ENCODE measurements at regions of chr10 and their contacts with region 1.

Region 1: DNA sequence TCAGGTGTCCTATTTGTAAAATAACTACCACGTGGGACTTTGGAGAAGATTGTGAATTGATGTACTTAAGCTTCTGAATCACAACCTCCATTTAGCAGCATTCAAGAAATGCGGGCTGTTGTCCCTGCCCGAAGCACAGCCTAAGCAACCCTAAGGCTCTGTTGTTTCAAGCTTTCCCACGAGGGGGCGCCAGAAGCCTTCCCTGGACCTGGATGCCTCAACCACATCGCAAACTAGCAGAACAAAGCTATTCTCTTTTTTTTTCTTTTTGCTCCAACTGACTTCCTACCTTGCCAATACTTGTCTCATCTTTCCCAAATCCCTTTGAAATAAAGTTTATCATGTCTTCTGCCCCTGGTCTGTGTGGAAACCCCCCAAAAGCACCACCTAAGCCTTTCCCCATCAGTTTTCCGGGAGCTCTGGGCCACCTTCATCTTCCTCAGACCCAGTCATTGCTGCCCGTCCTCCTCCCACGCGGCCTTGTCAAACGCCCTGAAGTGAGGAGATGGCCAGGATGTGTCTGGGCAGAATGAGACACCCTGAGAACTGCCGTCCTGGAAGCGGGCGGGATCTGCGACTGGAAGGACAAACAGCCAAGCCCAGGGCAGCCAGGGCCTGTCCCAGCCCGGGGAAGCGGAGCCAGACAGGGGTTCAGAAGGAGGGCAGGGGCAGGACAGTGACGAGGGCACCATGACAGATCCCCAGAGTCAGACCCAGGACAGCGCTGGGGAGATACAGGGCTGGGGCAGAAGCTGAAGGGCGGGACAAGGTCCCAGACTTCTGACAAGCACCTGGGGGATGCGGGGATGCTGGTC is 112.7 kb downstream of the SLIT1 start:
- DNase-seq: peak; percentile 65 to 85 (median 72)
- H3K4me3 ChIP-seq: no peak overlapping the region
- H3K4me3 Mint-ChIP-seq: no peak overlapping the region
- H3K27ac ChIP-seq: no peak overlapping the region
- H3K27ac Mint-ChIP-seq: no peak overlapping the region
- H3K4me1 ChIP-seq: no peaks in the 10 kb centered on the region
- H3K4me1 Mint-ChIP-seq: peaks cover 5 to 12% (median 8%) of the 10 kb centered on the region in 3 donors
- H3K27me3 ChIP-seq: peaks cover 4% of the 10 kb centered on the region
- H3K27me3 Mint-ChIP-seq: peaks cover 9 to 41% of the 10 kb centered on the region in 2 donors

Region 2: GRCh38 chr10:97096261-97097083 is 23.4 kb after region 1 on chr10:
- CTCF ChIA-PET with region 1: interaction called, 10 read pairs
- POLR2A ChIA-PET with region 1: no interaction called
- DNase-seq: peak; percentile 5 to 77 (median 36)
- H3K4me3 ChIP-seq: no peak overlapping the region
- H3K4me3 Mint-ChIP-seq: peak overlapping the region; percentile 61 to 89 (median 78)
- H3K27ac ChIP-seq: peak overlapping the region; percentile 24
- H3K27ac Mint-ChIP-seq: peak overlapping the region; percentile 70 to 94 (median 87)
- H3K4me1 ChIP-seq: peaks cover 22% of the 10 kb centered on the region
- H3K4me1 Mint-ChIP-seq: peaks cover 37 to 44% (median 43%) of the 10 kb centered on the region in 3 donors
- H3K27me3 ChIP-seq: no peaks in the 10 kb centered on the region
- H3K27me3 Mint-ChIP-seq: peaks cover 0 to 1% of the 10 kb centered on the region in 2 donors

Region 3: DNA sequence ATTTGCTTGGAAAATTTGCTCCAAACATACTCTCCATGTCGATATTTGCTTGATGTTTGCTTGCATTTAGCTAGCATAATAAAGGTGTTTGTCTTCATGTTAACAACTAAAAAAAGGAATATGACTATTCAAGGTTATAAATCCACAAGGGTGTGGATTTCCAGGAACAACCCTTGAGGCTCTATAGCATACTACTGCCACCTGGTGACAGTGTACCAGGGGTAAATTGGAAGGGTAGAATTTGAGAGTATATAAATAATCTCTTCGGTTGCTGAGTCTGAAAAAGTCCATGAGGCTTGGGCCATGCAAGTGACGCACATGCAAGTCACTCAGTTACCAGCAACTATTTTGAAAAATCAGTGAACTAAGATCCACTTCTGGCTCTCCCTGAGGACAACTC is 44.3 kb after region 1 on chr10:
- CTCF ChIA-PET with region 1: interaction called, 39 read pairs
- POLR2A ChIA-PET with region 1: no interaction called
- DNase-seq: peak in 1 of 5 donors; percentile 9
- H3K4me3 ChIP-seq: no peak overlapping the region
- H3K4me3 Mint-ChIP-seq: no peak overlapping the region
- H3K27ac ChIP-seq: no peak overlapping the region
- H3K27ac Mint-ChIP-seq: no peak overlapping the region
- H3K4me1 ChIP-seq: no peaks in the 10 kb centered on the region
- H3K4me1 Mint-ChIP-seq: no peaks in the 10 kb centered on the region
- H3K27me3 ChIP-seq: no peaks in the 10 kb centered on the region
- H3K27me3 Mint-ChIP-seq: peaks cover 1 to 24% of the 10 kb centered on the region in 2 donors

Measured in CD8-positive, alpha-beta memory T cell (primary cell).